ENCODE measurements at regions of chr9 and their contacts with region 1.

Region 1: GRCh38 chr9:6015278-6016157 is at the start of gene RANBP6:
- DNase-seq: peak; percentile 91 to 99 (median 94)

Region 2: DNA sequence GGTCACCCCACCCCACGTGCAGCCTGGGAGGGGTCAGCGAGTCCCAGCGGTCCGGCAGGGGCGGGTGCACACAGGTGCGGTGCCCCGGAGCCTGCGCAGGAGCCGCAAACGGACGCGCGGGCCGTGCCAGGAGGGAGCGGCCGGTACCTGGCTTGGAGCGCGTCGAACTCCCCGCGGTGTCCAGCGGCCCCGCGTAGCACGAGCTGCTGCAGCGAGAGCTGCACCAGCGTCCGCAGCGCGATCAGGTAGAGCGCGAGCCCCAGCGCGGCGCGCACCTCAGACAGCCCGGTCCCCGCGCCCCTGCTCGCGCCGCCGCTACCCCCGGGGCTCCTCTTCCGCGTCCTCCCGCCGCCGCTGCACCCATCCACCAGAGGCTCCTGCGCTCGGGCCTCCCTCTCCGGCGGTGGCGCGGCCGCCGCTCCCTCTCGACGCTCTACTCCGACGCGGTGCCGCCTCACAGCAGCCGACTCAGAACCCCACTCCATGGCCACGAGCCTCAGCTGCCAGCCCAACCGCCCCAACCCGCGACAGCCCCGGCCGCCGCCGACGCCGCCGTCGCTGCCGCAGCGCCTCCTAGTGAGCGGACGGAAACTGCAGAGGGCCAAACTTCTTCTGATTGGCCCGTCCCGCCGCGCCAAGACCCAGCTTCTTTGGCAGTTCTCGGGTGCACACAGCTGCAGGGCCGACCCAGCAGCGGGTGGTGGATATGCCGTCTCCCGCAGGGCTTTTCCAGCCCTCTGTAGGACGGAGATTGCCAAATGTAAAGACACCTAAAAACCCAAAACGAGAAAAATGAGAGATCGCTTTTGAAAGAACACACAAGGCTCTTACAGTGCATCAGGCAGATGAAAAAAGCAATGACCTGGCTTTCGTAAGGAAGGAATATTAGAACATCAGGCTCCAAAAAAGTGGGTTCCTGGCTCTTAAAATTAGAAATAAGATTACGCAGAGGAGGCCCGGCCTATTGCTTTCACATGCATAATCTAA is 182.7 kb before region 1 on chr9 and contains the start of gene ERMP1:
- intact Hi-C with region 1: loop called (anchors 10 kb)
- DNase-seq: peak; percentile 85 to 99 (median 92)

Region 3: DNA sequence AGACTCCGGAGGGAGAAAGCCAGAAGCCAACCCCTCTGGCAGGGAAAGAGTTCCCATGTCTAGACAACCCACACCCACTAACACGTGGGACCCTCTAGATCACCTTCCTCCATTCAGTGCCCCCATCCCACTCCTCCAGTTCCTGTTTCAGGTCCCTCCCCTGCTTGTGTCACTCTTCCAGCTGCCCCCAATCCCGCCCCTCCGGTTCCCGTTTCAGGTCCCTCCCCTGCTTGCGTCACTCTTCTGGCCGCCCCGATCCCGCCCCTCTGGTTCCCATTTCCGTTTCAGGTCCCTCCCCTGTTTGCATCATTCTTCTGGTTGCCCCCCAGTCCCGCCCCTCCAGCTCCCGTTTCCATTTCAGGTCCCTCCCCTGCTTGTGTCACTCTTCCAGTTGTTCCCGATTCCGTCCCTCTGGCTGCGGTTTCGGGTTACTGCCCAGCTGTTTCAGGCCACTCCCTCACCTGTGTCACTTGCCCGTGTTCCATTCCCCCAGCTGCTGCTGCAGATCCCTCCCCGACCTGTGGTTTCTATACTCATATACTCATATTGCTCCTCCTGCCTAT is 64.7 kb after region 1 on chr9:
- intact Hi-C with region 1: no loop called
- DNase-seq: peak; percentile 46 to 97 (median 74)

Measured in posterior cingulate gyrus (tissue), 11 donors.